AG04450 (cell line): ENCODE measurements at regions of chr10 and their contacts with region 1.

Region 1: DNA sequence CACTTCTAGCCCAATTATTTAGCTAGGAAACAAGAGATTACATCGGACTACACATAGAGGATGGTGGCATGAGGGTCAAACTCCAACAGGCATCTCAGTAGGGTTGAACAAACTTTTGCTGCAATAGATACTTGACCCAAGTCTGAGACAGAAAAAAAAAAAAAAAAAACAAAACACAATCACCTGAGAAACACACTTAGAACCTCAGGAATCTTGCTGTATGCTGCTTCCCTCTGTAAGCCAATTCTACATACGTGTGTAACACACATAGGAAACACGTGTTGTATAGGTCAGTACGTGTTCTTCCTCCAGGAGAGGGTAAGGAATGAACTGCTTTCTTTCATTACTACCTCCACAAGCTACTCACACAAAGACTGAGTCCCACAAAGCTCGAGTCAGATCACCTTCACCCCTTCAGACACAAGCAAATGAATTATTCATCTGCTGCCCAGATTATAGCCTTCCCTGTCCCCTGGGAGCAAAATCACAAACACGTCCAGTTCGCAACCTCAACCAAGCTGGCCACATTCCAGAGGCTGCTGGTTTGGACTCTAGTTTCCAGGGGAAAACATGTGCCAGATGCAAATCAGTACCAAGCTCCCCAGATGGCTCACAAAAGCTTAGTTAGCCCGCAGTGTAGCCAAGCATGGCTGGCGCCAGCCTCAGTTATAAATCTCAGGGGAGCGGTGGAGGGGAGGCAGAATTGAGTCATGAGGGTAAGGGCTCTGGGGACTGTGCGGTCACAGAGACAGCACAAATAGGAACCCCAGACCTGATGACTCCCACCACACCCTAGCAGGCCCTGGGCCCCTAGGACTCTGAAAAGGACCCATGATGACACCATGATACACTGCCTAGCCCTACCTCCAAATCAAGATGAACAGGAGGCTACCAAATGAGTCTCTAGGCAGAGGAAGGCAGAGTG is 15.1 kb downstream of the PSAP start:
- DNase-seq: no peak
- H3K4me3 ChIP-seq: no peak overlapping the region
- H3K27ac ChIP-seq: no peak overlapping the region
- H3K27me3 ChIP-seq: no peaks in the 10 kb centered on the region
- CTCF ChIP-seq: no peak

Region 2: GRCh38 chr10:71128311-71128980 is 707.5 kb before region 1 on chr10:
- CTCF ChIA-PET with region 1: no interaction called
- POLR2A ChIA-PET with region 1: no interaction called
- DNase-seq: no peak
- H3K4me3 ChIP-seq: no peak overlapping the region
- H3K27ac ChIP-seq: no peak overlapping the region
- H3K27me3 ChIP-seq: peaks cover 14% of the 10 kb centered on the region
- CTCF ChIP-seq: no peak

Region 3: GRCh38 chr10:71812016-71812912 is 23.7 kb before region 1 on chr10:
- CTCF ChIA-PET with region 1: no interaction called
- POLR2A ChIA-PET with region 1: no interaction called
- DNase-seq: no peak
- H3K4me3 ChIP-seq: no peak overlapping the region
- H3K27ac ChIP-seq: no peak overlapping the region
- H3K27me3 ChIP-seq: peaks cover 5% of the 10 kb centered on the region
- CTCF ChIP-seq: peak; percentile 86

Region 4: GRCh38 chr10:71850637-71851464 is 14.9 kb after region 1 on chr10 and contains the start of gene PSAP:
- CTCF ChIA-PET with region 1: interaction called, 6 read pairs
- POLR2A ChIA-PET with region 1: interaction called, 18 read pairs
- DNase-seq: peak; percentile 94
- H3K4me3 ChIP-seq: peak within 1 kb of the TSS; percentile 99
- H3K27ac ChIP-seq: peak within 1 kb of the TSS; percentile 87
- H3K27me3 ChIP-seq: no peaks in the 10 kb centered on the region
- CTCF ChIP-seq: no peak
- polyA plus RNA-seq, gene PSAP: 1,594 and 1,626 TPM in 2 replicates